ENCODE measurements at regions of chr1 and their contacts with region 1.

Region 1: GRCh38 chr1:211514030-211514754 is 22.2 kb upstream of the RD3 start:
- DNase-seq: peak; percentile 25
- H3K4me3 ChIP-seq: no peak overlapping the region
- H3K27me3 ChIP-seq: peaks cover 1% of the 10 kb centered on the region; the same call in 1 of the 2 replicates
- CTCF ChIP-seq: peak; percentile 85

Region 2: DNA sequence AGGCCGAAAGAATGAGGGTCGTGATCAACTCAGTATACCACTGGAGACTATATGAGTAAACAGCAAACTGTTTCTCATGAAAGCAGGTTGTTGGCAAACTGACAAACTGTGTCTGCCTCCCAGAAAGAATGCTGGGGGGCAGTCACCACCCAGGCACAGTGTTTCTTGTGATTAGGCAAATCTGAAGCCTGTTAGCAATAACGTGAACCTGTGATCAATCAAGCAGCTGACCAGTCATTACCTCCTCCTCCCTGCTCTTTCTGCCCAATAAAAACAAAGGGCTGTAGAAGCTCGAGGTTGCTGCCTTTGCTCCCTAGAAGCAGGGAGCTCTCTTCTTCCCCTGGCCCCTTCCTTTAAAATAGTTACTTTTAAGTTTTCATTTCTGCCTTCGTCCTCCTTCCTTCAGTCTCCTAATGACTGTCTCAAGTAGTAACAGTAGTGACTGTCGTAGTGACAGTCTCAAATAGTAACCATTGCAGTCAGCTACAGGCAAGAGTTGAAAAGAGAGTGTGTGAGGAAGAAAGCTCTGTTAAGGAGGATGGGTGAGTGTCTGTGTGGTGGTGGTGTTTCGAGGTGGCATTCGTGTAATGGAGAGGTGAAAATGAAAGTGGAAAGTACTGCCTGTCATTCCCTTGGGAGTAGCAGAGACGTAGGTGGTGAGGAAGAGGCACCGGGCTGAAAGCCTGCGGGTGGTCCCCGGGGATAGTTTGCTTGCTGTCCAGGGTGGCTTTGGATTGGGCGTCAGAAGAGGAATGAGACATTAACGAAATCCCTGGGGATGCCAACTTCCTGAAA is 1171.0 kb before region 1 on chr1:
- CTCF ChIA-PET with region 1: no interaction called
- POLR2A ChIA-PET with region 1: no interaction called
- DNase-seq: no peak
- H3K4me3 ChIP-seq: 0 out of 2 replicates have a peak overlapping the region, but pooled peaks have one; percentile 11
- H3K27me3 ChIP-seq: no peaks in the 10 kb centered on the region
- CTCF ChIP-seq: no peak

Region 3: DNA sequence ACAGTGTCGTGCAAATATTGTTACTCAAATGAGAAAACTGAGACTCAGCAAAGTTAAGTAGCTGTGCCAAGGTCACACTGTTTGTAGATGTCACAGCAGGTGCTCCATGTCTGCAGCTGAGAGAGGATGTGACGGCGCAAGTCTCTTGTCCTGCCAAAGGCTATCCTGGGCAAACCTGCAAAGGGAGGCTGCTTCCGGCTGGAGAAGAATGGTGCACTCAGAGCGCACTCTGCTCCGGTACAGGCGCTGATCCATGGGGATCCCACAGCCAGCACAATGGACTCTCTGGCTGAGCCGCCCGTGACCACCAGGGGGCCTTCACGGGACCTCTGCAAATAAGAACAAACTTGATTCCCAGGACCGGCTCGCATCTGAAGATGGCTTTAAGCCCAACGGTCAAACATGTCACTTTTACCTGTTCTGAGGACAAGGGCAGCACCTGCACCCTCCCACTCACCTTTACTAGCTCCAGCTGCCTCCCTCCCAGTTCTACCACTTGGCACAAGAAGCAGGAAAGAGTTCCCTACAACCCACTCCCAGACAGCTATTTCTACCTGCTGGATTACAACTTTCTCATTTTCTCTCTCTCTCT is 44.2 kb before region 1 on chr1:
- CTCF ChIA-PET with region 1: interaction called, 35 read pairs
- POLR2A ChIA-PET with region 1: no interaction called
- DNase-seq: no peak
- H3K4me3 ChIP-seq: no peak overlapping the region
- H3K27me3 ChIP-seq: peaks cover 8% of the 10 kb centered on the region
- CTCF ChIP-seq: peak; percentile 98

Region 4: GRCh38 chr1:211492511-211493132 is 21.6 kb before region 1 on chr1:
- CTCF ChIA-PET with region 1: interaction called, 14 read pairs
- POLR2A ChIA-PET with region 1: no interaction called
- DNase-seq: no peak
- H3K4me3 ChIP-seq: no peak overlapping the region
- H3K27me3 ChIP-seq: peaks cover 5% of the 10 kb centered on the region
- CTCF ChIP-seq: no peak

Region 5: DNA sequence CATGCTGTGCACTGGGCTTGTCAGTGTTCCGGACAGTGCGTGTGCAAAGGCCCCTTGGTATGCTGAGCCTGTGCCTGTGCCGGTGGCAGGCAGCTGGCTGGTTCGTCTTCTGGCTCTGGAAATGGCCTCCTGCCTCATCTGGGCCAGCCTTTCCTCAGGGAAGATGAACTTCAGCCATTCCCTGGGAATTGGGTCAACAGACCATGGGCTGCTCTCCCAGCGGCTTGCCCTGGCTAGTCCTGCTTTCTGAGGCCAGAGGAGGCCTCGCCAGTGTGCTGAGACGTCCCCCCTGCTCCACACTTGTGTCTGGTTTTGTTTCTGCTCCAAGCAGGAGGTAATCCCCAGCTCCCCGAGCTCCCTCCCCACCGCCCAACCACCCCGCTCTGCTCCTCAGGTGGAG is 10.3 kb after region 1 on chr1:
- CTCF ChIA-PET with region 1: interaction called, 29 read pairs
- POLR2A ChIA-PET with region 1: no interaction called
- DNase-seq: no peak
- H3K4me3 ChIP-seq: no peak overlapping the region
- H3K27me3 ChIP-seq: peaks cover 3% of the 10 kb centered on the region; the same call in 1 of the 2 replicates
- CTCF ChIP-seq: no peak

Measured in BJ (cell line).